Lower leg skin (tissue), 4 donors: ENCODE measurements at regions of chr20 and their contacts with region 1.

Region 1: GRCh38 chr20:38221119-38221589 is 39.4 kb downstream of the KIAA1755 start:
- DNase-seq: peak; percentile 32 to 90
- H3K4me3 ChIP-seq: no peak overlapping the region
- CTCF ChIP-seq: peak in 1 of 3 donors; percentile 81
- POLR2A ChIP-seq: no peak

Region 2: DNA sequence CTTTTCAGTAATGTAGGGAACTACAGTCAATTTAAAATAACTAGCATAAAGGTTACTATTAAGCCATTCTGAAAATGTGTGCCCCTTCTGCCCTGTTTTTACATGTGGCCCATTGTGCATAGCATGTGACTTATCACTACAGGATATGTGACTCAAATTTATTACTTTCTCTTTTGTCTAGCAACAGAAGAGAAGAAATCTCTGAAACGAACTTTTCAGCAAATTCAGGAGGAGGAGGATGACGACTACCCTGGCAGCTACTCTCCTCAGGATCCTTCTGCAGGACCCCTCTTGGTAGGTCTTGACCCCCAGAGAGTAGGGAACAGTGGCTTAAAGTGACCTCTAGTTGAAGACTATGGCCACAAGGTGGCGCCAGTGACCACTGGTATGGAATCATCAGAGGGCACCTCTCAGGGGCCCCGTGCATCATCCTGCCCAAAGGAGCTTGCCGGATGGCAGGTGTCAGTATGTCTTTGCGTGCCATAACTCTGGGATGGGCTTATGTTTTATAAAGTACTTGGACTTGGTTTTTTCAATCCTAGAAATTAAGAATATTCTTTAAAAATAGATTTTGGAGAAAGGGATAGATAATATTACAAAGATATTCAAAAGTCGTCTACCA is 163.7 kb before region 1 on chr20:
- intact Hi-C with region 1: loop called (anchors 5 kb)
- DNase-seq: peak; percentile 71 to 95
- H3K4me3 ChIP-seq: no peak overlapping the region
- CTCF ChIP-seq: no peak
- POLR2A ChIP-seq: no peak

Region 3: DNA sequence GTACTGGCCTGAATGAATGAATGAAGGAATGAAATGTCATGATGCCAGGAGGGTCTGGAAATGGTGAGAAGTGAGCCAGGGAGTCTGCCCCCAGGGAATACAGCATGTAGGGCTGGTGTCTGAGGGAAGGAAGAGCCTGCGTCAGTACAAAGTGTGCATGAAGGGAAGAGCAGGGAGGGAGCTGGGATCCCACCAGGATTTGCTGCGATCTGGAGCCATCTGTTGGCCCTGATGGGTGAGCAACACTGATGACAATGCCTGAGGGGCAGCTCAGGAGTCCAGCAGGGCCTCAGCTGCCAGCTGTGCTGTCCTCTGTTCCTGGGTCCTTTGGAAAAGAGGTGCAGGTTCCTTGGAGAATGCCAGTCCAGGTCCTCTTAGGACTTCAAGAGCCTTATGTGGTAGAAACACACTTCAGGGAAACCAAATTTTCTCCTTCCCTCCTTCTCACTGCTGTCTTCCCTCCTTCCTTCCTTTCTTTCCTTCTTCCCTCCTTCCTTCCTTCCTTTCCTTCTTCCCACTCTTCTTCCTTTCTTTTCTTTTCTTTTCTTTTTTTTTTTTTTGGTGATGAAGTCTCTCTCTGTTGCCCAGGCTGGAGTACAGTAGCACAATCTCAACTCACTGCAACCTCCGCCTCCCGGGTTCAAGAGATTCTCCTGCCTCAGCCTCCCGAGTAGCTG is 94.3 kb after region 1 on chr20:
- intact Hi-C with region 1: loop called (anchors 10 kb)
- DNase-seq: no peak
- H3K4me3 ChIP-seq: no peak overlapping the region
- CTCF ChIP-seq: no peak
- POLR2A ChIP-seq: no peak

Region 4: DNA sequence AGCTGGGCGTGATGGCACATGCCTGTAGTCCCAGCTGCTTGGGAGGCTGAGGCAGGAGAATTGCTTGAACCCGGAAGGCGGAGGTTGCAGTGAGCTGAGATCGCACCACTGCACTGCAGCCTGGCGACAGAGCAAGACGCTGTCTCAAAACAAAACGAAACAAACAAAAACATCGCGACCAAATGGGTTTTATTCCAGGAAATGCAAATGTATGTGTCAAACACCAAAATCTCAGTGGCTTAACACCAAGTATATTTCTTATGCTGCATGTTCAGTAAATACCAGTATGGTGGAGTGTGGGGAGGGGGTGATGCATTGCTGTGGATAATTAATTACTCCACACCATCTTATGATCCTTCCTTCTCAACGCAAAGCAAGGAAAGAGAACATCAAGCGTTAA is 555.2 kb after region 1 on chr20:
- intact Hi-C with region 1: no loop called
- DNase-seq: peak in 1 of 2 donors; percentile 6
- H3K4me3 ChIP-seq: no peak overlapping the region
- CTCF ChIP-seq: no peak
- POLR2A ChIP-seq: no peak